ENCODE measurements at regions of chr2 and their contacts with region 1.

Region 1: DNA sequence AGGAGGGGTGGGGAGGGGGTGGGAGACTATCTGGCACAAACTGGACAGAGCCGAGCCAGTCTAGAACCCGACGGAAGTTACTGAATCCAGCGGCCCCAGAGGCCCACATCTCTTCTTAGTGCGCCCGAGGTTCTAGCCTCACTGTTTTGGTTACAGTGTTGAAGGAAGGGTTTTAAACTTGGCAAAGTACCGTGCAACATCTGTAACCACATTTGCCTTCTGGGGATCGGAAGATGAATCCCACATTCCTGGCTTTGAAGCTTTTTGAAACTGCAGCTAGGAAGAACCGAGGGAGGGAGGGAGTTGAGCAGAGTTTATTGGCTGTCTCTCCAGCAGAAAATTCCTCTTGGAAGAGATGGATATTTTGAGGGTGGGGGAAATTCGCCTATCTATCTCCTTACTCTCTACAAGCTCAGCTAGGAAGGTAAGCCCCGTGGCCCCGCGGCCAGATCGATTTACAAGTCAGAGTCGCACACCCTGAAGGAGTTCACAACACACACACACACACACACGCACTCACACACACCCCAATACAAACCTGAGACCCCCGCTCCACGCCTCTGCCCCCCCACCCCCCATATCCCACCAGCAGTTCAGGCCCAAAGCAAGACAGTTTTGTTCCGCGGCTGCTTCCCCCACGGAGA is 1.0 kb downstream of the ACVR1 start:
- H3K4me3 Mint-ChIP-seq: peak overlapping the region; percentile 84
- H3K27ac Mint-ChIP-seq: peak overlapping the region; percentile 80
- H3K4me1 Mint-ChIP-seq: peaks cover 45% of the 10 kb centered on the region
- H3K27me3 Mint-ChIP-seq: no peaks in the 10 kb centered on the region

Region 2: DNA sequence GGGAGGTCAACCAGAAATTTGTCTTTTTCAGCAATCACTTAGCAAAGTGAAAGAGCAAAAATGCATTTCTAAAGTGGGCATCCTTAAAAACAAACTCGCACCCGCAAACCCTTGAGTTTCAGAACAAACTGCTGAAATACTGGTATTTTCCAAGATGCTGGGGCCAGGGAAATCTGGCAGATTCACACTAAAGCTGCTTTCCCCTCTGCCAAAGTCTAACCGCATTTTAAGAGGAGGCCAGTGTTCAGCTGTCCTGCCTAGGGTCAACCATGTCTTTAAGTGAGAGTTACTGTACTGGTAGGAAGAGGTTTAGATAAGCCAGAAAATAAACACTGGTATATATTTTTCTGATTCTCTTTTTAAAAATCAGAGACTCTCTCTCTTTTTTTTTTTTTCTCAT is 54.9 kb before region 1 on chr2:
- intact Hi-C with region 1: no loop called
- H3K4me3 Mint-ChIP-seq: no peak overlapping the region
- H3K27ac Mint-ChIP-seq: no peak overlapping the region
- H3K4me1 Mint-ChIP-seq: peaks cover 5% of the 10 kb centered on the region
- H3K27me3 Mint-ChIP-seq: no peaks in the 10 kb centered on the region

Region 3: DNA sequence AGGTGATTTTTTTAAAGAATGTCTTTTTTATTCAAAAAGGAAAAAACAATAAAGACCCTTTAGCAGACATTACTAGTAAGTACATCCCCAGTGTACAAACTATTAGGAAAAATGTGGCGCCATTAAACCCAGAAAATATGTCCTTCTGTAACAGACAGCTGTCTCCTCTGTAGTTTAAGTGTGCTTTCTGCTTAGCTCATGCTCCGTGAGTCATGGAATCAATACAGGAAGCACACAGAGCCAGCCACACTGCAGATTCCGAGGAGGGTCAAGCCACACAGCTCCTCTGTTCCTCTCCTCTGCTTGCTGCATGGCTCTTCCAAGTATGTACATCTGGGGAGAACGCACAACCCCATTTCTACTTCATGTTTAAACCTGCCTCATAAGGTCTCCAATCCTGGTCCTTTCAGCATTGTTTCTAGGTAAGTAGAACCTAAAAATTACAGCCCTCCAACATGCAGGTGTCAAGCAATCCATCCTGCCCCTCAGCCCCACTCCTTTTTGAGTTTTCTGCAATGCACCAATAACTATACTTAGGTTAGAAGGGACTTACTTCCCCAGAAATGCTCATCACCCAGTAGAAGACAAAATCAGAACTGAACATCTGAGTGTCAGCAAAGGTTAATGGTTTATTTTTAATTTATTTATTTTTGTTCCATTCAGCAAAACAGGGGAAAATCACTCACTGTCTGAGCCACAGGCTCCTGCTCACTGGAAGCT is 36.5 kb before region 1 on chr2:
- intact Hi-C with region 1: loop called (anchors 5 kb)
- H3K4me3 Mint-ChIP-seq: peak overlapping the region; percentile 68
- H3K27ac Mint-ChIP-seq: peak overlapping the region; percentile 93
- H3K4me1 Mint-ChIP-seq: peaks cover 37% of the 10 kb centered on the region
- H3K27me3 Mint-ChIP-seq: no peaks in the 10 kb centered on the region

Region 4: DNA sequence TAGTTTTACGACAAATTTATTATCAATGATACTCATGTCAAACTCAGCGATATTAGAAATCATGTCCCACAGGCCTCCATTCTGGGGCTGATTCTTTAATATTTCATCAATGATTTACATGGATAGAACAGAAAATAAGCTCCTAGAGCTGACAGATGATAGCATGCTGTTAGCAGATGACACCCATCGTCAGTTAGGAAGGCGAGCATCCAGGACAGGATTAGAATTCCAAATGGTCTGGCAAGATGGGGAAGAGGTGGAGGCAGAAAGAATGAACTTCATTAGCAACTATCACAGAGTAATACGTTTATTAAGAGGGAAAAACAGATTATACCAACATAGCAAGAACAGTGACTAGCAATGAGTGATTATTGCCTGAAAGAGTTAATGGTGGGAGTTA is 47.2 kb after region 1 on chr2:
- intact Hi-C with region 1: no loop called
- H3K4me3 Mint-ChIP-seq: no peak overlapping the region
- H3K27ac Mint-ChIP-seq: no peak overlapping the region
- H3K4me1 Mint-ChIP-seq: no peaks in the 10 kb centered on the region
- H3K27me3 Mint-ChIP-seq: no peaks in the 10 kb centered on the region

Measured in dendritic cell treated with granulocyte-macrophage colony-stimulating factor and Interleukin-4, amounts not matched to agents 40 ng/mL and 50 ng/mL, for 4 days (primary cell).